ENCODE measurements at regions of chr1 and their contacts with region 1.

Region 1: DNA sequence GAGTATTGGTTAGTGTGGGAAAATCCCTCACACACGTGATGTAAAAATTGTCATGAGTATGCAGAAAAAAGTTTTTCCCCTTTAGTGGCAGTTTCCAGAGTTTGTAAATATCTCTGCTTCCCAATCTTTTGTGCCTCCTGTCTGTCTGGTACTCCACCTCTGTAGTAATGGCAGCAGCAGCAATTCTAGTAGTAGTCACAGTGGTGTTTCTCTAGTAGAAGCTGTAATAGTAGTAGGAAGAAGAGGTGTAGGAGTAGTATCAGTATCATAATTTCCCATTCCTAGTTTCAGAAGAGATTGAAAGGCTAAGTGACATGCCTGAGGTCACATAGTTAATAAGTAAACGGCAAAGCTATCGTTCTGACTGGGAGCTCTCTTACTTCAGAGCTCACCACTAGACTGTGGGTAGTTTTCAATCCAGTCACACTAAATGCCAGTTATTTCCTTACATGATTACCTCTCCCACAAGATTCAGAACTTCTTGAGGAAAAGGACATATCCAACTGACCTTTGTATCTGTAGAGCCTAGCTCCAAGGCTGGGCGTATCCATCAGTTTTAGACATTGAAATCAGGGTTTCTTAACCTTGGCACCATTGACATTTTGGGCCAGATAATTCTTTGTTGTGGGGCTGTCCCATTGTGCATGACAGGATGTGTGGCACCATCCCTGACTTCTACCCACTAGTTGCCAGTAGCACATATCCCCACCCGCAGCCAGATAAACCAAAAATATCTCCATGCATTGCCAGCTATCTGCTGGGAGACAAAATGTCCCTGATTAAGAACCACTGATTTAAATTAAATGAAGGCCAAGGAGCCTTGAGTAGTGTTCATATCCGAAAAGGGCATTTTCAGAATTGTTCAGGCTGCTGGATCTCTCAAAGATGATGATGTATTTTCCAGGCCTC is 135.9 kb downstream of the FGGY start:
- DNase-seq: no peak
- H3K4me3 Mint-ChIP-seq: no peak overlapping the region
- H3K27ac Mint-ChIP-seq: peak overlapping the region; percentile 83
- H3K4me1 Mint-ChIP-seq: peaks cover 47% of the 10 kb centered on the region
- H3K27me3 Mint-ChIP-seq: no peaks in the 10 kb centered on the region

Region 2: GRCh38 chr1:59143133-59143487 is 289.7 kb before region 1 on chr1:
- intact Hi-C with region 1: loop called (anchors 1 kb)
- DNase-seq: no peak
- H3K4me3 Mint-ChIP-seq: no peak overlapping the region
- H3K27ac Mint-ChIP-seq: peak overlapping the region; percentile 62
- H3K4me1 Mint-ChIP-seq: peaks cover 59% of the 10 kb centered on the region
- H3K27me3 Mint-ChIP-seq: no peaks in the 10 kb centered on the region

Region 3: DNA sequence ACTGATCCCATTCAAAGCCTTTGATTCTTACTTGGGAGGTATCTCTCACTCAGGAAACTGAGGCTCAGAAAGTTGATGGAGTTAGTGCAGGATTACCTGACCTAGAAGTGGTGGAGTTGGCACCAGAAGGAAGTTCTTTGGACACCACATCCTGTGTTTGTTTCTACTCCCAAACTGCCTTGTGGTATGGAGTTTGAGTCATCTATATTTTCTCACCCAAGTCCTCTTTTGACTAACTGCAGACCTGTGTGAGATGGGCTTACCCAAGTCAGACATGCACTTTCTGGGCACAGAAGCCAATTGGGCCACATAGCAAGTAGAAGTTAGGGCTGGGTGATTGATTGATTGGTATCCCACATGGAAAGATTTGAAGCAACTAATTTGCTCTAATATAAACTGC is 99.8 kb before region 1 on chr1:
- intact Hi-C with region 1: loop called (anchors 1 kb)
- DNase-seq: peak; percentile 24
- H3K4me3 Mint-ChIP-seq: no peak overlapping the region
- H3K27ac Mint-ChIP-seq: peak overlapping the region; percentile 74
- H3K4me1 Mint-ChIP-seq: peaks cover 34% of the 10 kb centered on the region
- H3K27me3 Mint-ChIP-seq: no peaks in the 10 kb centered on the region

Region 4: GRCh38 chr1:59477286-59477685 is 44.5 kb after region 1 on chr1:
- intact Hi-C with region 1: loop called (anchors 1 kb)
- DNase-seq: peak; percentile 40
- H3K4me3 Mint-ChIP-seq: peak overlapping the region; percentile 54
- H3K27ac Mint-ChIP-seq: peak overlapping the region; percentile 91
- H3K4me1 Mint-ChIP-seq: peaks cover 21% of the 10 kb centered on the region
- H3K27me3 Mint-ChIP-seq: no peaks in the 10 kb centered on the region

Measured in activated T-helper 2 cell treated with anti-CD3 and anti-CD28 coated beads, Interferon-gamma antibody, Interleukin-2, Interleukin-4, amounts not matched to agents 10 μg/mL and 5 μg/mL and 100 μg/mL, durations not matched to agents 14 hours and 24 hours and 36 hours (primary cell).